CD4-positive, alpha-beta memory T cell (primary cell): ENCODE measurements at regions of chr12 and their contacts with region 1.

Region 1: GRCh38 chr12:106302401-106303201 is at the start of gene TCP11L2:
- DNase-seq: peak; percentile 93 to 95 (median 94)
- H3K4me3 ChIP-seq: peak within 1 kb of the TSS; percentile 86 to 98
- H3K4me3 Mint-ChIP-seq: peak within 1 kb of the TSS; percentile 93 to 99 (median 96)
- H3K27ac ChIP-seq: peak within 1 kb of the TSS; percentile 97
- H3K27ac Mint-ChIP-seq: peak within 1 kb of the TSS; percentile 95 to 100 (median 99)
- H3K4me1 ChIP-seq: peaks cover 59% of the 10 kb centered on the region
- H3K4me1 Mint-ChIP-seq: peaks cover 49 to 73% (median 56%) of the 10 kb centered on the region in 4 donors
- H3K27me3 ChIP-seq: no peaks in the 10 kb centered on the region
- H3K27me3 Mint-ChIP-seq: peaks cover 0 to 1% of the 10 kb centered on the region in 2 donors
- total RNA-seq, gene TCP11L2: 185 to 186 TPM

Region 2: DNA sequence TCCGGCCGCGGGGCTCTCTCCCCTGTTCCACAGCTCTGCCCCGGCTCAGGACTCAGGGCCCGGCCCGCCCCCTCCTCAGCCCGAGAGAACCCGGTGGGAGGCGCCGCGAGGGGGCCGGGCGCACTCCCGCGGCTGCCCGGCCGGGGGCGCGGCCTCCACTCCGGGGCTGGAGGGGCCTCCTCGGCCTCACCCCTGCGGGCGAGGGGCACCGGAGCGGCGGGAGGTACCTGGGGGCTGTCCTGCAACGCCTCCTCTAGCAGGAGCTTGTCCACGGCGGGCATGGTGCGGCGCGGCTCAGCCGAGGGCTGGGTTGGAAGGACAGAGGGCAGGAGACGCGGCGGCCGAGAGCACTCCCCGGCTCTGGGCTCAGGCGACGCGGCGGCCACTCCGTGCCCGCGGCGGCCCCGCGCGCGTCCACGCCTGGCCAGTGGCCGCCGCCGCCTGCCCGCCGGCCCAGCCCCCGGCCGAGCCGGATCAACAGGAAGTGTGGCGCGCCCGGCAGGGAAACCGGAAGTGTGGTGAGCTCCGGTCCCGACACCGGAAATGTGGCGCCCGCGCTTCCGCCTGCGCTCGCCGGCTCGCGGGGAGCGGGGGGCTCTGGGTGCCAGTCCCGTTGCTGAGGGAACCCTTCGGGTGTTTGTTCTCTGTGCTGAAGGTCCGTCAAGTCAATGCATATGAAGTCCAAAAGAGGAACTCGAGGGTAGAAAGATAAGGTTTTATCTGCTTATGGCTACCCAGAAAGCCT is 1066.7 kb before region 1 on chr12 and contains the start of gene APPL2:
- CTCF ChIA-PET with region 1: no interaction called
- POLR2A ChIA-PET with region 1: no interaction called
- intact Hi-C with region 1: loop called (anchors 5 kb)
- DNase-seq: peak; percentile 61 to 73 (median 69)
- H3K4me3 ChIP-seq: peak within 1 kb of the TSS; percentile 63 to 74
- H3K4me3 Mint-ChIP-seq: peak within 1 kb of the TSS; percentile 90 to 97 (median 94)
- H3K27ac ChIP-seq: peak within 1 kb of the TSS; percentile 56
- H3K27ac Mint-ChIP-seq: peak within 1 kb of the TSS; percentile 90 to 98 (median 92)
- H3K4me1 ChIP-seq: peaks cover 39% of the 10 kb centered on the region
- H3K4me1 Mint-ChIP-seq: peaks cover 32 to 45% (median 38%) of the 10 kb centered on the region in 4 donors
- H3K27me3 ChIP-seq: no peaks in the 10 kb centered on the region
- H3K27me3 Mint-ChIP-seq: no peaks in the 10 kb centered on the region
- total RNA-seq, gene APPL2: 56.0 to 61.0 TPM

Region 3: GRCh38 chr12:106239241-106239950 is 63.2 kb before region 1 on chr12:
- CTCF ChIA-PET with region 1: interaction called, 5 read pairs
- POLR2A ChIA-PET with region 1: interaction called, 223 read pairs
- intact Hi-C with region 1: no loop called
- DNase-seq: no peak
- H3K4me3 ChIP-seq: no peak overlapping the region
- H3K4me3 Mint-ChIP-seq: no peak overlapping the region
- H3K27ac ChIP-seq: no peak overlapping the region
- H3K27ac Mint-ChIP-seq: no peak overlapping the region
- H3K4me1 ChIP-seq: no peaks in the 10 kb centered on the region
- H3K4me1 Mint-ChIP-seq: peaks cover 1 to 4% (median 3%) of the 10 kb centered on the region in 4 donors
- H3K27me3 ChIP-seq: no peaks in the 10 kb centered on the region
- H3K27me3 Mint-ChIP-seq: no peaks in the 10 kb centered on the region

Region 4: DNA sequence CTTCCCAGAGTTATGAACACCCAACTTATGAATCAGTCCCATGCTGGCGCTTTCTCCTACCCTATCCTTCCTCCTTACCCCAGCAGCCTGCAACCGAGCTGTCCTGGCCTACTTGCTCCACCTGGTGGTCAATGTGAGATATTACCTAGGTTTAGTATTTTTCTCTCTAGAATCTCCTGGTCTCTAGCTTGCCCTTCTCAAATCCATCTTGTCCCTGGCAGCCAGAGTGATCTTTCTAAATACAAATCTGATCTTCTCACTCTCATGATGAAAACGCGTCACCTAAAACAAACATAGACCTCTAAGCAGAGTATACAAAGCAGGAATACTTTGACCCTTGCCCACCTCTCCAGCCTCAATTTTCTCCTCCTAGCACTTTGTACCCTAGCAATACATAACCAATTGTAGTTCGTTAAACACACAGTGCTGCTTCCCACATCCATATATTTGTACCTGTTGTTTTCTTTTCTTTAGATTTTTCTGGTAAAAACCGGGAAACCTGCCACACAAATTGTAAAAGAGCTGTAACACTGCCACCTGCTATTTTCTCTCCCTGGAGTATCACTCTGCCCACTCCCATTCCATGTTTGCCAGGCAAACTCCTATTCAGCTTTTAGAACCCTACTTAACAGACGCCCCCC is 20.0 kb before region 1 on chr12:
- CTCF ChIA-PET with region 1: interaction called, 37 read pairs
- POLR2A ChIA-PET with region 1: interaction called, 100 read pairs
- intact Hi-C with region 1: loop called (anchors 1 kb)
- DNase-seq: peak; percentile 41 to 60 (median 59)
- H3K4me3 ChIP-seq: no peak overlapping the region
- H3K4me3 Mint-ChIP-seq: no peak overlapping the region
- H3K27ac ChIP-seq: no peak overlapping the region
- H3K27ac Mint-ChIP-seq: peak overlapping the region in 4 of 7 donors; percentile 19 to 76 (median 28)
- H3K4me1 ChIP-seq: no peaks in the 10 kb centered on the region
- H3K4me1 Mint-ChIP-seq: peaks cover 0 to 5% (median 2%) of the 10 kb centered on the region in 4 donors
- H3K27me3 ChIP-seq: no peaks in the 10 kb centered on the region
- H3K27me3 Mint-ChIP-seq: peaks cover 0 to 11% of the 10 kb centered on the region in 2 donors

Region 5: DNA sequence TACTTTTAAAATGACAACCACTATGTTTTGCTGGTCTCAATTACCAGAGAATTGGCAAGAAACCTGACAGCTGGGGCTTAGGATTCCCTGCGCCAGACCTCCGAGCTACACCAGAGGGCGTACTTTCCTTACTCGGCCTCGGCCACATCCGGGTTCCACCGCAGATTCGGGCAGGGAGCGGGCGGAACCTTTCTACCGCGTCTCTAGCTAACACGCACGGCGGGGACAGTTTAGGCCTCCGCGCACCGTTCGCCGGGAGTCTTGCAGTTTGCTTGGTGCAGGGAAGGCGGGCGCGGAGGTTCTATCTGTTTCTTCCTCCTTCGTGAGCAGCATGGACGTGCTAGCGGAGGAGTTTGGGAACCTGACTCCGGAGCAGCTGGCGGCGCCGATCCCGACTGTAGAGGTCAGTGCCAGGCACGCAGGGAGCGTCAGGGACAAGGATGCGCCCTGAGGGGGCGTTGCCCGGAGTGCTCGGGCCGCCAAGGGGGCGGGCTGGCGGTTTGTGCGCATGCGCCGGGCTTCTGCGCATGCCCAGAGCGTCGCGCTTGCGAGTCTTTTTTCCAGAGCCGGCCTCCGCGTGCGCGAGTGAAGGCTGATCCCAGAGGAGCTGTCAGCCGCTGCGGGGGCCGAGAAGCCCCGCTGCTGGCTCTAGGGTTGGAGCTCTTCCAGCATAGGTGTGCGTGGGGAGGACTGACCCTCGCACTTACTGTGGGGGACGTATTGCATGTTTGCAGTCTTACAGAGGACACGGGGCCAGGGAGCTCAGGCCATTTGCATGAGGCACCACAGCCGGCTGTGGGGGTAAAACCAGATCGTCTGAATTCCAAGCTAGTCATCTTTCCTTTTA is 55.2 kb after region 1 on chr12 and contains the start of gene POLR3B:
- CTCF ChIA-PET with region 1: interaction called, 35 read pairs
- POLR2A ChIA-PET with region 1: interaction called, 108 read pairs
- intact Hi-C with region 1: loop called (anchors 1 kb)
- DNase-seq: peak; percentile 96 to 98 (median 97)
- H3K4me3 ChIP-seq: peak within 1 kb of the TSS; percentile 77 to 87
- H3K4me3 Mint-ChIP-seq: peak within 1 kb of the TSS; percentile 86 to 95 (median 94)
- H3K27ac ChIP-seq: peak within 1 kb of the TSS; percentile 68
- H3K27ac Mint-ChIP-seq: peak within 1 kb of the TSS; percentile 92 to 97 (median 95)
- H3K4me1 ChIP-seq: peaks cover 20% of the 10 kb centered on the region
- H3K4me1 Mint-ChIP-seq: peaks cover 10 to 20% (median 16%) of the 10 kb centered on the region in 4 donors
- H3K27me3 ChIP-seq: no peaks in the 10 kb centered on the region
- H3K27me3 Mint-ChIP-seq: no peaks in the 10 kb centered on the region
- total RNA-seq, gene POLR3B: 6.6 to 7.5 TPM

Region 6: DNA sequence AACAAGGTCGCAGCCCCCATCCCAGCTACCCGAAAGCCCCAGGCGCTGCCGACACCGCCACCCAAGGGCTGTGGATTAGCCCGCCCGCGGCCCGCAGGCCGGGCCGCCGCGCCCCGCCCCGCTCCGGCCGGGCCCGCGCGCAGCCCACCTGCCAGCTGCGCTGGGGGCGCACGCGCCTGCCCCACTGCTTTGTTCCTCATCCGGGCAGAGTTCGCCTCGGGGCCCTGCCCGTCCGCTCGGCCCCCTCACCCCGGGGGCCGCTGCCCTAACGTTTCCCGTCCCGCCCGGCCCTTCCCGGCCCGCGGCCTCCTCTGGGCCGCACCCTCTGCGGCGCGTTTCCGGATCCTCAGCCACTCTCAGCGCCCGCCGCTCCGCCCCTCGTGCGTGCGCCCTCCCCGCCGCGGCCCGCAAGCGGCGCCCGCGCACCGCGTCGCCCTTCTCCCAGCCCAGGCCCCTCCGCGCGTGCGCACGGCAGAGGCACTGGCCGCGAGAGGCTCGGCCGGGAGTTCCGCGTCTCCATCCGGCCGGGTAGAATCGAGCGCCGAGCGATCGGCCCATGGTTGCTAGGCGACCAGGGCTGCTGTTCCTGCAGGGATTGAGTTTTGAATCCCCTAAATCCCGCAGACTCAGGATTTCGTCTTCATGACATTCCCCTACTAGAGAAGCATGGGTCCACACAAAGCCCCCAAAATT is 1458.4 kb after region 1 on chr12 and contains the start of gene PRDM4:
- CTCF ChIA-PET with region 1: no interaction called
- POLR2A ChIA-PET with region 1: no interaction called
- intact Hi-C with region 1: loop called (anchors 2 kb)
- DNase-seq: peak; percentile 87 to 94 (median 93)
- H3K4me3 ChIP-seq: peak within 1 kb of the TSS; percentile 77 to 82
- H3K4me3 Mint-ChIP-seq: peak within 1 kb of the TSS; percentile 89 to 95 (median 92)
- H3K27ac ChIP-seq: peak within 1 kb of the TSS; percentile 64
- H3K27ac Mint-ChIP-seq: peak within 1 kb of the TSS; percentile 90 to 98 (median 94)
- H3K4me1 ChIP-seq: peaks cover 41% of the 10 kb centered on the region
- H3K4me1 Mint-ChIP-seq: peaks cover 17 to 45% (median 26%) of the 10 kb centered on the region in 4 donors
- H3K27me3 ChIP-seq: no peaks in the 10 kb centered on the region
- H3K27me3 Mint-ChIP-seq: no peaks in the 10 kb centered on the region
- total RNA-seq, gene PRDM4: 35.8 to 38.3 TPM